Mammary epithelial cell (primary cell): ENCODE measurements at regions of chr11 and their contacts with region 1.

Region 1: DNA sequence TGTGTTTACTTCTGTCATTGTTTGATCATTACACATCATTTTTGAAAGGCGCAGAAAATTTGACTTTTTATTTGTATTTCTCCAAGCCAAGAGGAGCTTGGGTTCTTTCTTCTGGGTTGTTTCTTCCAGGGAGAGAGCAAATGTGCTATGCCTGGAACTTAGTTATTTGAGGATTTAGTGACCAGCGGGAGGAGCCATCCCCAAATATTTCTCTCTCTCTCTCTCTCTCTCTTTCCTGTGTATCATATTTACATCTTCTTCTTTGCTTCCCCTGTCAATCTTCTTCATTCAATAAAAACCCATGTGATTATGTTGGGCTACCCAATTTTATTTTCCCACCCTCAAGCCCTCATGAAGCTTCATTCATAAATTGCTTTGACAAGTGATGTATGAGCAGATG is 534.5 kb downstream of the LRRC4C start:
- DNase-seq: peak; percentile 4
- H3K4me3 ChIP-seq: no peak overlapping the region
- H3K27ac ChIP-seq: no peak overlapping the region
- H3K4me1 ChIP-seq: no peaks in the 10 kb centered on the region
- H3K27me3 ChIP-seq: no peaks in the 10 kb centered on the region
- CTCF ChIP-seq: peak in 1 of 2 donors; percentile 57

Region 2: GRCh38 chr11:40306938-40307548 is 617.9 kb before region 1 on chr11:
- CTCF ChIA-PET with region 1: no interaction called
- dilution Hi-C with region 1: no loop called
- in situ Hi-C with region 1: no loop called
- intact Hi-C with region 1: no loop called
- DNase-seq: peak; percentile 32
- H3K4me3 ChIP-seq: no peak overlapping the region
- H3K27ac ChIP-seq: no peak overlapping the region
- H3K4me1 ChIP-seq: no peaks in the 10 kb centered on the region
- H3K27me3 ChIP-seq: no peaks in the 10 kb centered on the region
- CTCF ChIP-seq: peak; percentile 69 to 84

Region 3: DNA sequence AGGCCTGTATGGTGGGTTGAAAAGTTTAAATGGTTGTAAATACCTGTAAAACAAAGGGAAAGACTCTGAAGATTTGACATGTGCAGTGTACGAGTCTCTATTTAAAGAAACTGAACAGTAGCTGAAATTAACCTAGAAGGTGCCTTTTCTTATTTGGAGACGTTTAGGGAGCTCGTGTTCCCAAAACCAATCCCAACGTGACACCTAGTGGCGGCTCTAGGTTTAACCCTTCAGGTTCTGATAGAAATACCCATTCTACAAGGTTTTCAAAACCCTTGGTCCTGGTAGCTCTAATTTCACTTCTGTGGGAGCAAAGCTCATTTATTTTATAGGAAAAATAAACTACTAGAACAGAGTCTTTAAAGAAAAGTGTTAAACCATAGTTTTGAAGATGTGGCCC is 276.2 kb after region 1 on chr11:
- CTCF ChIA-PET with region 1: no interaction called
- dilution Hi-C with region 1: no loop called
- in situ Hi-C with region 1: no loop called
- intact Hi-C with region 1: loop called (anchors 1 kb)
- DNase-seq: peak; percentile 29
- H3K4me3 ChIP-seq: no peak overlapping the region
- H3K27ac ChIP-seq: no peak overlapping the region
- H3K4me1 ChIP-seq: no peaks in the 10 kb centered on the region
- H3K27me3 ChIP-seq: no peaks in the 10 kb centered on the region
- CTCF ChIP-seq: peak; percentile 58 to 70